CD8-positive, alpha-beta memory T cell (primary cell): ENCODE measurements at regions of chr11 and their contacts with region 1.

Region 1: GRCh38 chr11:125568970-125569914 is at the start of gene EI24:
- DNase-seq: peak; percentile 80 to 87 (median 83)
- H3K4me3 ChIP-seq: peak within 1 kb of the TSS; percentile 88
- H3K4me3 Mint-ChIP-seq: peak within 1 kb of the TSS; percentile 93 to 97 (median 95)
- H3K27ac ChIP-seq: peak within 1 kb of the TSS; percentile 89
- H3K27ac Mint-ChIP-seq: peak within 1 kb of the TSS; percentile 83 to 98 (median 94)
- H3K4me1 ChIP-seq: peaks cover 13% of the 10 kb centered on the region
- H3K4me1 Mint-ChIP-seq: peaks cover 26 to 32% (median 31%) of the 10 kb centered on the region in 3 donors
- H3K27me3 ChIP-seq: no peaks in the 10 kb centered on the region
- H3K27me3 Mint-ChIP-seq: no peaks in the 10 kb centered on the region
- total RNA-seq, gene EI24: 62.7 to 65.7 TPM

Region 2: DNA sequence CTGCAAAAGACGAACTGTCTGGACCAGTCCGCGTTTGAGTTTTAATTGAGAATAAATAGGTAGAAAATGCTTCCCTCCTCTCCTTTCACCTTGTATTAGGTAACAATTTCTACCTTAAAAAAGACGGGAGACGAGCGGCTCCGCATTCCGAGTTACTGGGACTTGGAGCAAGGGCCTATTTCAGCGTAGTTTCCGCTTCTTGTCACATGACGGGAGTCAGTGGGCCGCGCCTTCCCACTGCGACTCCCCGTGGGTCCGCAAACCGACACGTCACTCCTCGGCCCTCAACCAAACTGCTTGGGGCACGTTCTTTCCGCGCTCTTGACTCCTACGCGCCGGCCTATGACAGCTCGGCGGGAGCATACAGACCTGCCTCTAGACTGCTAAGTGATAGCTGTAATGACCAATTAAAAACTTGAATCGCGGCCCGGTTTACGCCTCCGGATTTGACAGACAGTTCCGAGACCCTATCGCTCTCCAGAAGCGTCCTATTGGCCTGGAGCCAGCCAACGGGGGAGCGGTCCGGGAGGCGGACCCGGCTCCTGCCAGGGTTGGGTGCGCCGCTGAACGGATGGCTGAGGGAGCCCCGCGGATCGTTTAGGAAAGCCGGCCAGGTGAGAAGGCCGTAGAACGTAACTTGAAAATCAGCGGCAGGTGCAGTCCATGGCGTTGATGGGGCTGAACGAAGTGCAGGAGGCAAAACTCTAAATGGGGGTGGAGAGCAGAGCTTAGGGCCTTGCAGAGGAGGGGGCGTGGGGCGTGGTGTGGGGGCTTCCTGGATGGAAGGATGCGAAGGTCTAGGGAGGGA is 23.3 kb after region 1 on chr11 and contains the start of gene STT3A:
- CTCF ChIA-PET with region 1: interaction called, 17 read pairs
- POLR2A ChIA-PET with region 1: interaction called, 31 read pairs
- DNase-seq: peak; percentile 95 to 99 (median 98)
- H3K4me3 ChIP-seq: peak within 1 kb of the TSS; percentile 100
- H3K4me3 Mint-ChIP-seq: peak within 1 kb of the TSS; percentile 90 to 98 (median 93)
- H3K27ac ChIP-seq: peak within 1 kb of the TSS; percentile 100
- H3K27ac Mint-ChIP-seq: peak within 1 kb of the TSS; percentile 92 to 99 (median 98)
- H3K4me1 ChIP-seq: peaks cover 20% of the 10 kb centered on the region
- H3K4me1 Mint-ChIP-seq: peaks cover 41 to 54% (median 53%) of the 10 kb centered on the region in 3 donors
- H3K27me3 ChIP-seq: no peaks in the 10 kb centered on the region
- H3K27me3 Mint-ChIP-seq: no peaks in the 10 kb centered on the region
- total RNA-seq, gene STT3A: 140 to 143 TPM

Region 3: DNA sequence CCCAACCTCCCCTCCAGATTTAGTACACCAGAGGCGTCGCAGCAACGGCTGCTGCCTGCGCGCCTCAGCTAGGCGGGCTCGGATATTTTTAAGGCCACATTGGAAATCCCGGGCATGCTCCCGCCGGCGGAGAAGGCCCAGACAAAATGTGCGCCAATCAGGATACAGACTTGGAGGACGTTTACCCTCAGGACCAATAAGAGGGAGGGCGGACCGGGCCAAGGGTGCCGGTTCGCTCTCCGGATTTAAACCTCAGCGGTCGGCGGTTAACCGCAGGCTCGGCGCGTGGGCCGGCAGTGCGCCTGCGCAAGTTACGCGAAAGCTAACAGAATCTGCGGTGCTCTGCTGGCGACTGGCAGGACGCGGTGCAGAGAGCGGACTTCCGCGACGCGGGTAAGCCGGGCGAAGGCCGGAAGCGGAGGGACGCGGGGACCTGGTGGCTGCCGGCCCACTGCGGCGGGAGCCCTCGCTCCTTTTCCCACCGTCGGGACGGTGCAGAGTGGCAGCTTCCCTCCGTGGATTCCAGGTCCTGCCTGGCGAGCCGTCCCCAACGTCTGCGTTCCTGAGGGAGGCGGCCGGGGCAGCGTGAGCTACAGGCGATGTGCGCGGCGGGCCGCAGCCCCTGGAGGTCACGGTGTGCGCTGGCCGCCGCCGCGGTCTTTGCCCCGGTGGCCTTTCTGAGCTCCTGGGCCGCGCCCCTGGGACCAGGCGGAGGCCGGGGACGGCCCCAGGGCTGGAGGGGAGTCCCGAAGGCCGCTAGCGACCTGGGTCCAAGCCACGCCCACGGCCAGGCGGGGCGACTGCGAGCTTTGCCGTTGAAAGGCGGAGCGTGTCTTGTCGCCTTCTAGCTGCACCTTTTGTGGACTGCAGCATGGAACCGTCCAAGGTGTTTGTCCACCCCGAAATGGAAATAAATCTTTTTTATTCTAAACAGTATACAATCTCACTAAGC is 318.4 kb after region 1 on chr11 and contains the start of gene HYLS1:
- CTCF ChIA-PET with region 1: interaction called, 10 read pairs
- POLR2A ChIA-PET with region 1: interaction called, 4 read pairs
- DNase-seq: peak; percentile 91 to 96 (median 96)
- H3K4me3 ChIP-seq: peak within 1 kb of the TSS; percentile 79
- H3K4me3 Mint-ChIP-seq: peak within 1 kb of the TSS; percentile 89 to 97 (median 94)
- H3K27ac ChIP-seq: peak within 1 kb of the TSS; percentile 72
- H3K27ac Mint-ChIP-seq: peak within 1 kb of the TSS; percentile 93 to 99 (median 96)
- H3K4me1 ChIP-seq: peaks cover 11% of the 10 kb centered on the region
- H3K4me1 Mint-ChIP-seq: peaks cover 25 to 35% (median 34%) of the 10 kb centered on the region in 3 donors
- H3K27me3 ChIP-seq: no peaks in the 10 kb centered on the region
- H3K27me3 Mint-ChIP-seq: peaks cover 0 to 4% of the 10 kb centered on the region in 2 donors
- total RNA-seq, gene HYLS1: 7.3 to 8.1 TPM